ENCODE measurements at regions of chr7 and their contacts with region 1.

Region 1: DNA sequence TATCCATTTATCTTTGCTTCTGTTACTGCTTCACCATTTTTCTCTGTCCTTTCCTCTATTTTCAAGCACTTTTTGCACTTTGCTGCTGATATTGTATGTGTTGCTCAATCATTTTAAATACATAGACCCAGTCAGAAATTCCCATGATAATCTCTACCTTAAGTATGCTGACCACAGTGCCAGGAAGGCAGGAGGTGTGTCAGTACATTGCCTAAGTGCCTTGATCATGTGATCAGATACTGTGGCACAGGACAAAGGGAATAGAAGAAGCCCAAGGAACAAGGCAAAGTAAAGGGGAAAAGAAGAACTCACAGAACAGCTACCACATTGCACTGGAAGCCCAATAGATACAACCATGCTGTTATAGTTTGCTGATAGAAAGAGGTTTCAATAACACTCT is 53.7 kb upstream of the CD36 start:
- DNase-seq: peak in 1 of 2 donors; percentile 46
- ATAC-seq: peak; percentile 22 to 73
- H3K4me3 ChIP-seq: no peak overlapping the region
- H3K27ac ChIP-seq: peak overlapping the region in 3 of 4 donors; percentile 11 to 70 (median 13)
- H3K4me1 ChIP-seq: peaks cover 14 to 32% of the 10 kb centered on the region in 2 donors
- H3K27me3 ChIP-seq: no peaks in the 10 kb centered on the region
- CTCF ChIP-seq: no peak
- POLR2A ChIP-seq: no peak

Region 2: DNA sequence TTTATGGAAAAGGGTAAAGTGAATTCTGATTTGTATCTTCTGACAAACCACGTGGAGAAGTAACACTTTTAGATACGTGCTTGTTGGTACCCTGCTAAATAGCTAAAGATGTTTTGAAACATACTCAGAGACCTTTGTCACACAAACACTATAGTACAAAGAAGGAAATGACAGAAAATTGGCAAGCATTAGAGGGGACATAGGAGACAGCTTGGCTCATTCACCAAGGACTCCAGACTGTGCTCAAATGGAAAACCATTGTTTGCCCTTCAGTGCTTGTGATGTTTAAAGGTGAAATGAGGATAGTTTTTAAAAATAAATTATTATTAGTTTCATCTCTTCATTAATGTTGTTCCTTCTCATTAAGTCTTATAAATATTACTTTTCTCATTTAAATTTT is 19.7 kb after region 1 on chr7:
- in situ Hi-C with region 1: no loop called
- intact Hi-C with region 1: no loop called
- DNase-seq: no peak
- ATAC-seq: peak; percentile 53 to 72
- H3K4me3 ChIP-seq: peak overlapping the region in 3 of 4 donors; percentile 12 to 48 (median 12)
- H3K27ac ChIP-seq: peak overlapping the region; percentile 80 to 87 (median 84)
- H3K4me1 ChIP-seq: peaks cover 52 to 76% of the 10 kb centered on the region in 2 donors
- H3K27me3 ChIP-seq: no peaks in the 10 kb centered on the region
- CTCF ChIP-seq: no peak
- POLR2A ChIP-seq: peak in 1 of 2 donors; percentile 12

Region 3: DNA sequence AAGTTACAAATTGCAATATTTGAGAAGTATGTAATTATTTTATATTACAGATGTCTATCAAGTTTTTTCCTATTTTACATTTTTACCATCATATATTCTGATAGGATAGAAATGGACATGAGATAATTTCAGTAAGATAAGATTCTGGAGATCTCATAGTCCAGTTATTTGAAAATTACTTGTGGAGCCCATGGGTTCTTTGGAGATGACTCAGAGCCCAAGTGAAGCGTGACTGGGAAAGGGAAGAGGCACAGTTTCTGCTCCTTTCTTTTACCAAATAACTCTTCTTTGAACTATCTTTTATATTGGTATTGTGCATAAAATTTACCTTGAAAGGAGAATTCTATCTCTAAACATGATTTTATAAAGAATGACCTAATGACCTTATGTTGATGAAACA is 56.1 kb after region 1 on chr7:
- in situ Hi-C with region 1: no loop called
- intact Hi-C with region 1: loop called (anchors 5 kb)
- DNase-seq: no peak
- ATAC-seq: no peak
- H3K4me3 ChIP-seq: peak overlapping the region; percentile 27 to 48 (median 44)
- H3K27ac ChIP-seq: peak overlapping the region; percentile 82 to 92 (median 86)
- H3K4me1 ChIP-seq: peaks cover 29 to 44% of the 10 kb centered on the region in 2 donors
- H3K27me3 ChIP-seq: no peaks in the 10 kb centered on the region
- CTCF ChIP-seq: no peak
- POLR2A ChIP-seq: no peak